AG04450 (cell line): ENCODE measurements at regions of chr4 and their contacts with region 1.

Region 1: DNA sequence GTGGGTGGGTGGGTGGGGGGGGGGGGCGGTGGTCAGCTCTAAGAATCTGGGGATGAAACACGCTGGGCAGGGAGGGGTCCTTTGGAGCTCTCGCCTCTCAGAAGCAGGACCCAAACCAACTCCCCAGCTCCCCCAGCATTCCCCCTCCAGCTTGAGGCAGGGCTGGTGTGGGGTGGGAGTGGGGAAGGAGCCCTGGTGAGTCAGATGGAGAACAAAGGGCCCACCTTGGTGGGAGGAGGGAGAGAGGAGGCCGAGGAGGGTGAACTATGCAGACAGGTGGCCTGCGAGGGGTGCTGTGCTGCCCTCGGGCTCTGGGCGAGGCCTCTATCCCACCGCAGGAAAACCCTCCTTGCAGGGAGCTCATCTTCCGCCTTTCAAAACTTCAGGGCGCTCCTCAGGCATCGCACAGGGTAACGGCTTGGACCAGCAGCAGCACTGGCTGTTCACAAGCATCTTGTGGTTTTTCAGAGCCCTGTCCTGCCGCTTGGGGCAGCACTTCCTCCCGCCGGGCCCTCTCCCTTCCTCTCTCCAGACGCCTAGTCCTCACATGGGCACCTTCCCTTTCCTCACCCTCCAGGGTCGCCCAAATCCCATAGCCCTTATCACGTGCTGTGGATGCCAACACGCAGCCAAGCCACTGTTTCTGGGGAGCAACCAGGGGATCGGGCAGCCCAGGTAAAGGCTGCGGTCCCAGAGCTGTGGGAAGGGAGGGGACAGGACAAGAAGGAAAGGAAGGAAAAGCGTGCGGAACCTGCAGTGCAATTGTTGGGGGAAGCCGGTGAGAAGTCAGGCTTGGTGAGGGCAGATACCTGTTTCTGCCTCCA is 34.0 kb upstream of the GRPEL1 start:
- DNase-seq: peak; percentile 24
- H3K4me3 ChIP-seq: peak overlapping the region; percentile 42
- H3K27ac ChIP-seq: no peak overlapping the region
- H3K27me3 ChIP-seq: peaks cover 26% of the 10 kb centered on the region
- CTCF ChIP-seq: peak; percentile 77

Region 2: GRCh38 chr4:7081891-7082471 is 19.9 kb before region 1 on chr4:
- CTCF ChIA-PET with region 1: interaction called, 15 read pairs
- POLR2A ChIA-PET with region 1: no interaction called
- DNase-seq: no peak
- H3K4me3 ChIP-seq: no peak overlapping the region
- H3K27ac ChIP-seq: no peak overlapping the region
- H3K27me3 ChIP-seq: peaks cover 30% of the 10 kb centered on the region
- CTCF ChIP-seq: peak; percentile 31; the same call in 1 of the 2 replicates

Region 3: DNA sequence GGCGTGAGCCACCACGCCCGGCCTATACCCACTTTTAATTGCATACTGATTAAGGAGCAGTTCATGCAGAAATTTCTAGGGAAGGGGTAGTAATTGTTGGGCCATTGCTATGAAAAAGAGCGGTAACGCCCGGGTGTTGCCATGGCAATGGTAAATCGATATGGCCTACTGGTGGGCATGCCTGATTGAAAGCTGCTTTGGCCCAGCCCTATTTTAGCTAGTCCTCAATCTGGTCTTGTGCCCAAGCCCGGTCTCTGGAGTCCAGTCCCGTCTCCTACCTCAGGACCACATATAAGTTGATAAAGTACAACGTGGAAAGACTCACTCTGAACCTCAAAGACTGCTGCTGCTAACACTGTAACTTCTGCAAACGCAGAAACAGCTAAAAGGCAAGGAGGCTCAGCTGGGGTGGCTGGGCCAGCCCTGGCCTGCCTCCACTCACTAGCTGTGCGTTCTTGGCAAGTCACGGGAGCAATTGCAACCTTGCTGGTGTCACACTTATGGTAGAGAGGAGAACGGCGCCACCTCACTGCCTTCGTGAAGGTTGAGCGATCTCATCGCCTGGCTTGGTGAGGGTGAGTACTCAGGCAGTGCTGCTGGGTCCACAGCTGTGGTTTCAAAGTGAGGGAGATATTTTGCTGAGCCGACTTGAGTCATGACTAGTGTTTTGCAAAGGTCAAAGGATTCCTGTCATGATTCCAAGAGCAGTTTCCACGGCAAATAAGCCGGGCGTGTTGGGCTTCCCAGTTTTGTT is 23.0 kb after region 1 on chr4:
- CTCF ChIA-PET with region 1: interaction called, 12 read pairs
- POLR2A ChIA-PET with region 1: no interaction called
- DNase-seq: peak; percentile 85
- H3K4me3 ChIP-seq: 0 out of 2 replicates have a peak overlapping the region, but pooled peaks have one; percentile 13
- H3K27ac ChIP-seq: peak overlapping the region; percentile 61
- H3K27me3 ChIP-seq: peaks cover 23% of the 10 kb centered on the region
- CTCF ChIP-seq: 0 out of 2 replicates have a peak, but pooled peaks have one; percentile 5